Activated B cell treated with CpG ODN at 0.5 μM for 24 hours (primary cell): ENCODE measurements at regions of chr6 and their contacts with region 1.

Region 1: GRCh38 chr6:15595461-15596173 is 67.2 kb downstream of the DTNBP1 start:
- DNase-seq: no peak
- ATAC-seq: no peak
- H3K4me3 Mint-ChIP-seq: no peak overlapping the region
- H3K27ac Mint-ChIP-seq: no peak overlapping the region
- H3K4me1 Mint-ChIP-seq: peaks cover 36% of the 10 kb centered on the region
- H3K27me3 Mint-ChIP-seq: no peaks in the 10 kb centered on the region
- CTCF ChIP-seq: no peak

Region 2: DNA sequence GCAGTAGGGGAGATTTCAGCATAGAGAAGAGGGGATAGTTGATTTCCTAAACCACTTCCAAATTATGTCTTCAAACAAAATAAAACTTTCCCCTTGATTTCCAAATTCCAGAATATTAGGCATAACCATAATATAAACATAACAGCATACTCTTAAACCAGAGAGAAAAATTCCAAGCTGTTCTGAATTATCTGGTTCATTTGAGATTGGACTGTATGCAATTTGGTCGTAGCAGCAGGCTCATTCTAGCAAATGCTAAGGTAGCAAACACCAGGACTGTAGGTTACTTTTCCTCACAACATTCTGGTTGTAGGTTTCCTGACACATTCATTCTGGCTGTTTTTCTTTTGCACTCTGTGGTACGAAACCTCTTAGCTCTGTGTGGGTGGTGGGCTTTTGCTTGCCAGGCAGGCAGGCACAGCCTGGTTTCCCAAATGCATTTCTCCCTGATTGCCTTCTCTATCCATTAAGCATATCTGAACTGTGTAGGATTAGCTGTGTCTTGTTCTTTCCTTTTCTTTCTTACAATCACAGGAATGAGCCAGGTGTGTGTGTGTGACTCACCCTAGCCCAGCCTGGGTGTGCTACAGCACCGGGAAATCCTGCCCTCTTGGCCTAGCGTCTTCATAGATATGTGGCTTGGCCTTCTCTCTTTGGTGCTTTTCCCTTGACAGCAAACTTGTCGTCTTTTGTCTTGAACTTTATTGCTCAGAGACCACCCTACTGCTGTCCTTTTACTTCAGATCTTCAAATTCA is 272.7 kb before region 1 on chr6:
- CTCF ChIA-PET with region 1: no interaction called
- POLR2A ChIA-PET with region 1: no interaction called
- intact Hi-C with region 1: no loop called
- DNase-seq: no peak
- ATAC-seq: no peak
- H3K4me3 Mint-ChIP-seq: no peak overlapping the region
- H3K27ac Mint-ChIP-seq: peak overlapping the region; percentile 69
- H3K4me1 Mint-ChIP-seq: peaks cover 94% of the 10 kb centered on the region
- H3K27me3 Mint-ChIP-seq: no peaks in the 10 kb centered on the region
- CTCF ChIP-seq: no peak

Region 3: DNA sequence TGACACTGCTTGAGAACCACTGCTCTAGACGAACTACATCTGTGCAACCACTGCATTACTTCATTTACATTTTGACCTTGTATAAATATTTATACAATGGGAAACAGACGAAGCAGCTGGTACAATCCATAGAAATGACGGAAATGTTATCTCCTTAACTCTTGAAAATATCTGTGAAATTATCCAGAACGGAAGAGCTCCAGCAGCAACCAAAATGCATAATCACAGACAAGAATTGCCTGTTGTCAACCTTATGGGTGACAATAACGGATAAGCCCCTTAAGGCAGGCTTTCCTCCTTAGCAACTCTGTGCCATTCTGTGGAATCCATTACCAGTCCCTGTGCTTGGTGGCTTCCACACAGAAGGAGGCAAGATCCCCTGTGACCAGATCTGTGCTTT is 48.2 kb before region 1 on chr6:
- CTCF ChIA-PET with region 1: no interaction called
- POLR2A ChIA-PET with region 1: no interaction called
- intact Hi-C with region 1: loop called (anchors 10 kb)
- DNase-seq: no peak
- ATAC-seq: no peak
- H3K4me3 Mint-ChIP-seq: no peak overlapping the region
- H3K27ac Mint-ChIP-seq: no peak overlapping the region
- H3K4me1 Mint-ChIP-seq: peaks cover 41% of the 10 kb centered on the region
- H3K27me3 Mint-ChIP-seq: no peaks in the 10 kb centered on the region
- CTCF ChIP-seq: no peak